AG04450 (cell line): ENCODE measurements at regions of chr7 and their contacts with region 1.

Region 1: DNA sequence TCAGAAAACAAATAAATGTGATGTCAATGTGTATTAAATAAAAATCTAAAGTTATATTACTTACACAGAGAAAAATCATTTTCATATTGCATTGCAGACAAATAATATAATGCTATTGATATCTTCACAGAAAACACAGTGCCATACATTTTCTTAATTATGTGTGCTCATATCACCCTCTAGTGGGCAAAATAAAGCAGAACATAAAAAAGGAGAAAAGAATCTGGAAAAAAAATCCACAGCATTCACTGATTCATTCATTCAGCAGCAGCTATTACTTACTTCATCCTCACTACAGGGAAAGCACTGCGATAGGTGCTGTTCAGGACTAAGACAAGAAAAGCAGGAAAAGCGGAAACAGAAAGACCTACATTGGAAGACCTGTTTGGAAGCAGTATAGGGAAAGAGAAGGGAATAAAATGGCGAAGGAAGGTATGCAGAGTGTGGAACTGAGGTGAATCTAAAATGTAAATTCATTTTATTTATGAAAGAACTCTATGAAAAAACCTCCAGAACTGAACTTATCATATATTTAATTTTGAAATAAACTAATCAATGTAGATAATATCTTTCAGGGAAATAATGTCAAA is 73.2 kb downstream of the POT1 start:
- DNase-seq: peak; percentile 13
- H3K4me3 ChIP-seq: no peak overlapping the region
- H3K27ac ChIP-seq: no peak overlapping the region
- H3K27me3 ChIP-seq: no peaks in the 10 kb centered on the region
- CTCF ChIP-seq: peak; percentile 74

Region 2: DNA sequence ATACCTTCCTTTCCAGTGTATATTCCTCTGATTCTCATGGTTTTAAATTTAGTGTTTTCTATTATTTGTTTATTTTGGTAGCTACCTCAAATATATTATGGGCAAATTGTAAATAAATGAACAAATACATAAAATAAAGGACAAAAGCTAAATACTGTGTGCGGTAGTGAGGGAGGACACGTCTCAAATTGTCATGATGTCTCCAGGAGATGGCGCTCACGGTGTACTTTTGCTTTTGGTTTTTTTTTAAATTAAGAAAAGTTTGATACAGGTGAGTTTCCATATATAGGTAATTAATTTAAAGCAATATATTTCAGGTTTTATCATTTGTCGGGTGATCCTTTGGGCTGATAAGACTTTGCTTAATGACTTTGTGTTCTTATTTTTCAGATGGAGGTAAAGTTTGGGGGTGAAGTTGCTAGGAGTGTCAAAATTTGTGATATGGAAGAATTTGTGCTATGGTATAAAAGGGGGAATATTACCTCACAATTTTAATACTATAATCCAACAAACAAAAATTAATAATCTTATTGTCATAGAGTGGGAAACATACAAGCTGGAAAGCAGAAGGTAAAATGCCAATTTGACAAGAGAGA is 755.1 kb before region 1 on chr7:
- CTCF ChIA-PET with region 1: interaction called, 29 read pairs
- POLR2A ChIA-PET with region 1: no interaction called
- DNase-seq: no peak
- H3K4me3 ChIP-seq: no peak overlapping the region
- H3K27ac ChIP-seq: no peak overlapping the region
- H3K27me3 ChIP-seq: no peaks in the 10 kb centered on the region
- CTCF ChIP-seq: peak; percentile 58

Region 3: GRCh38 chr7:124171068-124171467 is 685.3 kb before region 1 on chr7:
- CTCF ChIA-PET with region 1: interaction called, 26 read pairs
- POLR2A ChIA-PET with region 1: no interaction called
- DNase-seq: peak; percentile 37
- H3K4me3 ChIP-seq: no peak overlapping the region
- H3K27ac ChIP-seq: no peak overlapping the region
- H3K27me3 ChIP-seq: no peaks in the 10 kb centered on the region
- CTCF ChIP-seq: peak; percentile 77